A673 (cell line): ENCODE measurements at regions of chr17 and their contacts with region 1.

Region 1: DNA sequence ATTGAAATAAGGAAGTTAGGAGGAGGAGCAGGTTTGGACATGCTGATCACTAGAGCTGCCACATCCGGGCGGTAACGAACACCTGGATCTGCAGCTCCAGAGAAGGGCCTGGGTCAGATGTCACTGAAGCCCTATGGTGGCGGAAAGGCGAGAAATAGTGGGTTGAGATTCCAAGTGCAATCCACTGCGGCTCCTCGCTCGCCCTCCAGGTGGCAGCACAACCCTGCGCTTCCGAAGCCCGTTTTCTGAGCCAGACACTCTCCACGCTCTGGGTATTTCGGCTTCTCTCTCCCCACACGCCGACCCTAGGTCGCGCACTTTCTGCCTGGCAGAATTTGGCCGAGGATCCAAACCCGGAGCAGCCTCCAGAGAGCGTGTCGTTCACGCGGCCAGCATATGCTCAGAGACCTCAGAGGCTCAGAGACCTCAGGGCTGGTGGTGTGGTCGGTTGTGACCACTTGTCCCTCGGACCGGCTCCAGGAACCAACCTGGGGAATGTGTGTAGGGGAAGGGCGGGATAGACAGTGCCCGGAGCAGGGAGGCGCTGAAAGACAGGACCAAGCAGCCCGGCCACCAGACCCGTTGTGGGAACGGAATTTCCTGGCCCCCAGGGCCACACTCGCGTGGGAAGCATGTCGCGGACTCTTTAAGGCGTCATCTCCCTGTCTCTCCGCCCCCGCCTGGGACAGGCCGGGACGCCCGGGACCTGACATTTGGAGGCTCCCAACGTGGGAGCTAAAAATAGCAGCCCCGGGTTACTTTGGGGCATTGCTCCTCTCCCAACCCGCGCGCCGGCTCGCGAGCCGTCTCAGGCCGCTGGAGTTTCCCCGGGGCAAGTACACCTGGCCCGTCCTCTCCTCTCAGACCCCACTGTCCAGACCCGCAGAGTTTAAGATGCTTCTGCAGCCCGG is 744 bp upstream of the SLC2A4 start:
- DNase-seq: peak; percentile 90
- H3K4me3 ChIP-seq: peak overlapping the region; percentile 55
- H3K27ac ChIP-seq: peak overlapping the region; percentile 48
- H3K4me1 ChIP-seq: peaks cover 18% of the 10 kb centered on the region
- H3K27me3 ChIP-seq: no peaks in the 10 kb centered on the region
- CTCF ChIP-seq: peak; percentile 94

Region 2: DNA sequence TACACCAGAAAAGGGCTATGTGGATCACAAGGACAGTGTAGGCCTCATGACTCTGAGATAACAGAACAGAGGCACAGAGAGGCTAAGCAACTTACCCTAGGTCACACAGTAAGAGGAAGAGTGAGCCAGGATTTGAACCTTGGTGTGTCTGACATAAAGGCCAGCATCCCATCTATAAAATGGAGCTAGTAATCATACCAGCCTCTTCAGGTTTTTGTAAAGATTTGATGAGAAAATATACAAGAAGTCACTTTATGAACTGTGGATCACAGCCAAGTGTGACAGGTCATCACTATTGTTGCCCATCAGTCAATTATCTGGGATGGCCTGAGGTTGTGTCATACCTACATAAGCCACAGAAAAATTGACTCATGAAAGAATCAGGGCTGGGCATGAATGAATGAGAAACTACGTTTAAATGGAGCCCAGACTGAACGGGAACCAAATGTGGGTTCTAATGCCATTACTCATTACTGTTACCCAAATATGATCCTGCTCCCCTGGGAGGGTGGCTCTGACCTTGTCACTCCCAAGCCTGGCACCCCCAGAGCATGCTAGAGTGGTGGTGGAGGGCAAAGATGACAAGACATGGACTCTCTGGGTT is 483.8 kb before region 1 on chr17:
- CTCF ChIA-PET with region 1: no interaction called
- POLR2A ChIA-PET with region 1: no interaction called
- intact Hi-C with region 1: no loop called
- DNase-seq: no peak
- H3K4me3 ChIP-seq: no peak overlapping the region
- H3K27ac ChIP-seq: no peak overlapping the region
- H3K4me1 ChIP-seq: no peaks in the 10 kb centered on the region
- H3K27me3 ChIP-seq: peaks cover 26% of the 10 kb centered on the region
- CTCF ChIP-seq: no peak

Region 3: DNA sequence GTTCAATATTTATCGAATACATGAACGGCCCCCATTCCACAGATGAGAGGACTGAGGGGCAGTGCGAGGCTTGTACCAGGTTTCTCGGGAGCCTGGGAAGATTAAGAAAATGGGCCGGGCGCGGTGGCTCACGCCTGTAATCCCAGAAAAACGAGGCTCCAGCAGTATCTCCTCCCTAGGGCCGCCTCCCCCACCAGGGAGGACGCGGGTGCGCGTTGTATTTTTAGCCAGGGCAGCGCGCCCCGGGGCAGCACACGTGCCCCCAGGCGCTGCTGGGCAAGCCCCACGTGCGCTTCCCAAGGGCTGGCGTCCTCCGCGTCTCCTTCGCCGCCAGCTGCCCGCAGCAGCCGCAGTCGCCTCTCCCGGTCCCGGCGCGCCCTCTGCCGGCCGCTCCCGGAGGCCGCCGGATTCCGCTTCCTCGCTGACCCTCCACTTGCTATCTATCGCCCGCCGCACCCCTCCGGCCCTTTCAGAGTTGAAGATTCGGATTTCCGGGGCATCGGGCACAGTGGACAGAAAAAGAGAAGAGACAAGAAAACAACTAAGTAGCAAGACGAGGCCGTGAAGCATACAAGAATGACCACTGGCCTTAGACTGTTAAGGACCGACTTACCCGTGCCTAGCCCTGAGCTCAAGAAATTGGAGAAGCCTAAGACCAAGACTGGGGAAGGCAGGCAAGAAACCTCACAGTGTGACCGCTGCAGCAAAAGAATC is 15.6 kb after region 1 on chr17:
- CTCF ChIA-PET with region 1: interaction called, 30 read pairs
- POLR2A ChIA-PET with region 1: interaction called, 21 read pairs
- intact Hi-C with region 1: loop called (anchors 1 kb)
- DNase-seq: peak; percentile 85
- H3K4me3 ChIP-seq: peak overlapping the region; percentile 24
- H3K27ac ChIP-seq: no peak overlapping the region
- H3K4me1 ChIP-seq: peaks cover 22% of the 10 kb centered on the region
- H3K27me3 ChIP-seq: no peaks in the 10 kb centered on the region
- CTCF ChIP-seq: peak; percentile 94

Region 4: DNA sequence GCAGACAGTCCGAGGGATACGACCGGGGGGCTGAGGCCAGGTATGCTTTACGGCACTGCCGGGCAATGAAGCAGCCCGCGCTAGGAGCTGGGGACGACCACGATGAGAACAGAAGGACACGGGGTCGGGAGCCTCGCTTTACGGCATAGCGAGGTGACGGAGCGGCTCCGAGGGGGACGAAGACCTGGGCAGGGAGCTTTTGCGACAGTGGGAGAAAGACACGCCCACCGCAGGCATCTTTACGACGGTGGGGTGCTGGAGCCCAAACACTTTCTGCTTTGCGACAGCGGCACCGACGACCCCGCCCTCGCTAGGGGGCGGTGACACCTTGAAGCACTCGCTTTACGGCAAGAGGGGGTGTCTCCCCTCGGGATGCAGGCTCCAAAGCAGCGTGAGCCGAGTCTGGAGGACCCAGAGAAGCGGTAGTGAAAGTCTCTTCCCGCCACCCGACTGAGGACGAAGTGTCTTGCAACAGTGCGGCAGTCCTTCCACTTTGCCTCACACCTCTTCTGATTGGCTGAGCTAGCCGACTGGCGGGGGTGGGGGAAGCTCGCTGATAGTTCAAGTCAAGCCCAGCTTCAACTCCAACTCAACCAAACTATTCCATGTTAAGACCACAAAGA is 48.7 kb after region 1 on chr17:
- CTCF ChIA-PET with region 1: no interaction called
- POLR2A ChIA-PET with region 1: no interaction called
- intact Hi-C with region 1: loop called (anchors 1 kb)
- DNase-seq: peak; percentile 100
- H3K4me3 ChIP-seq: peak overlapping the region; percentile 92
- H3K27ac ChIP-seq: peak overlapping the region; percentile 88
- H3K4me1 ChIP-seq: peaks cover 19% of the 10 kb centered on the region
- H3K27me3 ChIP-seq: no peaks in the 10 kb centered on the region
- CTCF ChIP-seq: no peak